Activated T-helper 2 cell treated with anti-CD3 and anti-CD28 coated beads, Interferon-gamma antibody, Interleukin-2, Interleukin-4, amounts not matched to agents 10 μg/mL and 5 μg/mL and 100 μg/mL, durations not matched to agents 14 hours and 24 hours and 36 hours (primary cell): ENCODE measurements at regions of chr16 and their contacts with region 1.

Region 1: DNA sequence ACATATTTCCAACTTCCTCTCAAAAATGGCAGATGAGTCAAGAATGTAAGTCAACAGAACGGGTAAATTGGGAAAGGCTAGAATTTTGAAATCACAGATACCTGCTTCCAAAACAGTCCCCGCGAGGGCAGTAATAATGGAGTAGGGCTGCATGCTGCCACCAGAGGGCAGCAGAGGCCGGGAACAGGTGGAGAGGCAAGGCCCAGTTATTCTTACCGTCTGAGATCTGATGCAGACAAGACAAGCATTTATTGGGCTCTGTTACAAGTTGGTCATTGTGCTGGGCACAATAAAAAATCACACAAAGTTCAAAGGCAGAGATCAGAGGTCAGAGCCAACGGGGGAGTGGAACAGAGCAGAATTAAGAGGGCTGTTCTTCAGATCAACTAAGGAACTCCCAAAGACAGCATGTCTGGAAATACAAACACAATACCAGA is 8.8 kb upstream of the MLKL start:
- DNase-seq: peak; percentile 68
- H3K4me3 Mint-ChIP-seq: no peak overlapping the region
- H3K27ac Mint-ChIP-seq: no peak overlapping the region
- H3K4me1 Mint-ChIP-seq: peaks cover 11% of the 10 kb centered on the region
- H3K27me3 Mint-ChIP-seq: peaks cover 4% of the 10 kb centered on the region

Region 2: GRCh38 chr16:74650966-74651567 is 58.4 kb before region 1 on chr16:
- intact Hi-C with region 1: no loop called
- DNase-seq: no peak
- H3K4me3 Mint-ChIP-seq: no peak overlapping the region
- H3K27ac Mint-ChIP-seq: no peak overlapping the region
- H3K4me1 Mint-ChIP-seq: peaks cover 21% of the 10 kb centered on the region
- H3K27me3 Mint-ChIP-seq: no peaks in the 10 kb centered on the region

Region 3: GRCh38 chr16:74774203-74775116 is 65.0 kb after region 1 on chr16 and contains the start of gene FA2H:
- intact Hi-C with region 1: loop called (anchors 5 kb)
- DNase-seq: peak; percentile 65
- H3K4me3 Mint-ChIP-seq: peak within 1 kb of the TSS; percentile 24
- H3K27ac Mint-ChIP-seq: no peak within 1 kb of the TSS
- H3K4me1 Mint-ChIP-seq: peaks cover 5% of the 10 kb centered on the region
- H3K27me3 Mint-ChIP-seq: peaks cover 34% of the 10 kb centered on the region
- total RNA-seq, gene FA2H: not detected in 2 replicates

Region 4: DNA sequence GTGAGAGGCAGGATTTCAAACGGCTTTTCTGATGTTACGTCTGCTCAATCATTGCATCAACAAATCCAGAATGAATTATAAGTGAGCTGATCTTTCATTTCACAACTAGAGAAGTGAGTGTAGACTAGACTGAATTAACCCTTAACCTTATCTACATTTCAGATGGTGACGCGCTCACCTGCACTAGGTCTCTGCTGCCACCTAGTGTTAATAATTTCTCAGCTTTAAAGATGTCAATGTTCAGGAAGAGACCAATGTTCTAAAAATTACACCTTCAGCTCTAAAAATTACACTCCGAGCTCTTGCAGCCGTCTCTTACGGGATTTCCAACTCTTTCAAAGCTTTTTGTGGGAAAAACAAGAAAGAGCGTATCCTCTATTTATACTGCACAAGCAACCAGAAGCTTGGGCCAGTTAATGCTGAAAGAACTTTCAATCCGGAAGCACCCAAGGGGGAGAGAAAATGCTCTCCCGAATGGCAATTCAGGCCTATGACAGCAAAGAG is 153.3 kb after region 1 on chr16:
- intact Hi-C with region 1: loop called (anchors 1 kb)
- DNase-seq: no peak
- H3K4me3 Mint-ChIP-seq: no peak overlapping the region
- H3K27ac Mint-ChIP-seq: no peak overlapping the region
- H3K4me1 Mint-ChIP-seq: peaks cover 3% of the 10 kb centered on the region
- H3K27me3 Mint-ChIP-seq: no peaks in the 10 kb centered on the region

Region 5: GRCh38 chr16:75385507-75386152 is 676.2 kb after region 1 on chr16:
- intact Hi-C with region 1: loop called (anchors 10 kb)
- DNase-seq: no peak
- H3K4me3 Mint-ChIP-seq: no peak overlapping the region
- H3K27ac Mint-ChIP-seq: no peak overlapping the region
- H3K4me1 Mint-ChIP-seq: peaks cover 6% of the 10 kb centered on the region
- H3K27me3 Mint-ChIP-seq: peaks cover 22% of the 10 kb centered on the region